Heart left ventricle (tissue), 16 donors: ENCODE measurements at regions of chr4 and their contacts with region 1.

Region 1: DNA sequence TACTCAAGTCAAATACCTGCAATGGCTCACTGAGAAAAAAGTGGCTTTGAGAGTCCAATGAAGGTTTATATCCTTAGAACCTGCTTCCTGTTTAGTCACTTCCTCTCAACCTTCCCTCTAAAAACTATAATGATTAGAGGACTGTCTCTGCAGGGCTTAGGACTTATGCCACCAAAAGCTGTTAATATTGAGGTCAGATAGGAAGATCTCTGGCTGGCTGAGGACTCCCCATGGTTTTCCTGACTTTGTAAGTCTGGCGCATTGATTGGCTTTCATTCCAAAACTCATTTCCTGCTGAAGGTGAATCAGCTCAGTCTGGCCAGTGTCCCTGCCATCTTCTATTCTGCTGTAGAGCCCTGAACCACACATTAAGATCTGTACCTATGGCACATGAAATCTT is 140.9 kb upstream of the ANK2 start:
- DNase-seq: no peak
- ATAC-seq: no peak
- H3K4me3 ChIP-seq: no peak overlapping the region
- H3K27ac ChIP-seq: no peak overlapping the region
- H3K4me1 ChIP-seq: peaks cover 0 to 9% (median 4%) of the 10 kb centered on the region in 12 donors
- H3K27me3 ChIP-seq: no peaks in the 10 kb centered on the region
- CTCF ChIP-seq: no peak
- POLR2A ChIP-seq: no peak

Region 2: GRCh38 chr4:112853662-112854256 is 54.8 kb before region 1 on chr4:
- intact Hi-C with region 1: loop called in 1 of 10 experiments (anchors 5 kb)
- DNase-seq: no peak
- ATAC-seq: no peak
- H3K4me3 ChIP-seq: no peak overlapping the region
- H3K27ac ChIP-seq: peak overlapping the region in 1 of 12 donors; percentile 63
- H3K4me1 ChIP-seq: peaks cover 0 to 28% (median 3%) of the 10 kb centered on the region in 12 donors
- H3K27me3 ChIP-seq: no peaks in the 10 kb centered on the region
- CTCF ChIP-seq: peak in 9 of 12 donors; percentile 5 to 45 (median 27)
- POLR2A ChIP-seq: no peak

Region 3: GRCh38 chr4:112927544-112927943 is 19.0 kb after region 1 on chr4:
- intact Hi-C with region 1: no loop called
- DNase-seq: no peak
- ATAC-seq: no peak
- H3K4me3 ChIP-seq: no peak overlapping the region
- H3K27ac ChIP-seq: peak overlapping the region in 1 of 12 donors; percentile 39
- H3K4me1 ChIP-seq: peaks cover 0 to 30% (median 7%) of the 10 kb centered on the region in 12 donors
- H3K27me3 ChIP-seq: no peaks in the 10 kb centered on the region
- CTCF ChIP-seq: no peak
- POLR2A ChIP-seq: no peak

Region 4: GRCh38 chr4:113106108-113106507 is 197.6 kb after region 1 on chr4:
- intact Hi-C with region 1: no loop called
- DNase-seq: no peak
- ATAC-seq: peak in 2 of 4 donors; percentile 32 to 39
- H3K4me3 ChIP-seq: no peak overlapping the region
- H3K27ac ChIP-seq: no peak overlapping the region
- H3K4me1 ChIP-seq: peaks cover 0 to 14% (median 0%) of the 10 kb centered on the region in 12 donors
- H3K27me3 ChIP-seq: no peaks in the 10 kb centered on the region
- CTCF ChIP-seq: peak in 11 of 12 donors; percentile 10 to 60 (median 41)
- POLR2A ChIP-seq: no peak

Region 5: DNA sequence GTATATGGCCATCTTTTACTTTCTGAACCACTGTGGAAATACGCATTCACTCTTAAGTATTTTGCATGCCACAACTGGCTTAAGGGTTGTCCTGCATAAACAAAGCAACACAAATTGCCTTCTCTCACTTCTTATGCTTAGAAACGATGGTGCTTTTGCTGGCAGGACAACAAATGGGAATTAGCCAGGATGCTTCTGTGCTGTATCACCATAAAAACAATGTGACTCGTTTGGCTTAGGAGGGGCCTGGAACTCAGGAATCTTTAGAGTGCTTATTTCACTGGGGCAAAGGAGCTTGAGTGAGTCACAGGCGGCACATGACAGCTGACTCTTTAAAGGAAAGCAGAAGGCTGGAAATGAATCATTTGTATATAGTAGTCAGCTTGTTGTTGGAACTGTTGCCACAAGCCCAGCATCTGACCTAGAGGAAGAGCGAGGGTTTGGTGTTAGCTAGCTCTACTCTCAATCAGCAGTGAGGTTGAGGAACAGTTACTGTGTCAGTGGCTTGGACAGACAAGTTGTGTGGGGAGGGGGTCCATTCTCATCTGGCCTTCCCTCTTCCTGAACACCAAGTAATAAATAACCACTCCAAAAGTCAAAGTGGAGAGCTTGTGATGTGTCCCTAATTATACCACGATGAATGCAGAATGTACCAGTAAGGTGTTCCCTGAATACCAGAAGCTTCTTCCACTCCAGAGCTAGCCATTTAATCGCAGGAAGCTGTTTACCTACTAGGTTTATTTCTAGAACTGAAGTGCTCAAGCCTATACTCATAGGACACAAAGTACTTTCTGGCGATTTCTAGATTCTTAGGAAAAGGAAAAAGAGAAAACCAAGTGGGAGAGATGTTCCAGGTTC is 559.9 kb after region 1 on chr4:
- intact Hi-C with region 1: no loop called
- DNase-seq: peak in 4 of 5 donors; percentile 71 to 89 (median 82)
- ATAC-seq: peak; percentile 92 to 97 (median 96)
- H3K4me3 ChIP-seq: peak overlapping the region in 1 of 12 donors; percentile 1
- H3K27ac ChIP-seq: peak overlapping the region; percentile 75 to 95 (median 86)
- H3K4me1 ChIP-seq: peaks cover 2 to 50% (median 31%) of the 10 kb centered on the region in 12 donors
- H3K27me3 ChIP-seq: no peaks in the 10 kb centered on the region
- CTCF ChIP-seq: no peak
- POLR2A ChIP-seq: peak in 1 of 2 donors; percentile 43